Lower leg skin (tissue), 4 donors: ENCODE measurements at regions of chr11 and their contacts with region 1.

Region 1: GRCh38 chr11:58688789-58689503 is 42.8 kb downstream of the GLYAT start:
- DNase-seq: no peak
- H3K4me3 ChIP-seq: no peak overlapping the region
- CTCF ChIP-seq: no peak
- POLR2A ChIP-seq: no peak

Region 2: GRCh38 chr11:59810189-59810910 is 1121.4 kb after region 1 on chr11 and contains the start of gene MRPL16:
- intact Hi-C with region 1: loop called (anchors 5 kb)
- DNase-seq: peak; percentile 82 to 97
- H3K4me3 ChIP-seq: peak within 1 kb of the TSS; percentile 93
- CTCF ChIP-seq: no peak
- POLR2A ChIP-seq: no peak
- total RNA-seq, gene MRPL16: 21.4 to 35.6 (median 28.8) TPM